OCI-LY7 (cell line): ENCODE measurements at regions of chr16 and their contacts with region 1.

Region 1: DNA sequence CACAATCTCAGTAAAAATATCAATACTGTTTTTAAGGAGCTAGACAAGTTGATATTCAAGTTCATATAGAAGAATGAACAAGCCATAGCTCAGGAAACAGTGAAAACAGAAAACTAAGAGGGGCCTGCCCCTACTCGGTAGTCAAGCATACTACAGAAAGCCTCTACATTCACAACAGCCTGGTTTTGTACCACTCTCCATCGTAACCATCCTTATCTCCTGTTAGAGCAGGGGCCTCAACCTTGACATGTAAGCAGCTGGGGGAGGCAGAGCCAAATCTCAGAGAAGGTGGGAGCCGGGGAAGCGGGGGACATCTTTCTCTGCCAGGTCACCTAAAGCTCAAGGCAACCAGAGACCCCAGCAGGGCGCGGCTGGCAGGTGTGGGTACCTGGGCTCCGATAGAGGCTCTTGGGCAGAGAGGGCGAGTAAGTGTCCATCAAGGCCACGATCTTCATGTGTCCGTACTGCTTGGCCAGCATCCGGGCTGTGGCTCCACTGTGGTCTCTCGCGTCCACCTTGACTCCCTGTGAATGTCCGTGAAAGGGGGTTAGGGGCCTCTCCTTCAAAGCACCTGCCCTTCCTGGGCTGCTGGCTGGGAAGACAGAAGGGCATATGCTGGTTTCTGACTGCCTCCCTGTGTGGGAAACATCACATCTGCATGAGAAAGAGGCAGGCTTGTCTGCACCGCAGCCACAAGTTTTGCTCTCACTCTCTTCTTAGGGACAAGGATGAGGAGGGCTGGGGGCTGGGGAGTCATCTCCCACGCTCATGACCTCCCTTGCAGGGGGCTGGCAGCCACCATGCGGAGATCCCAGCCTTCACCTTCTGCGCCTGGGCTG is 20.2 kb downstream of the ANKS3 start:
- DNase-seq: no peak
- H3K4me3 ChIP-seq: no peak overlapping the region
- H3K27ac ChIP-seq: no peak overlapping the region
- H3K4me1 ChIP-seq: peaks cover 9% of the 10 kb centered on the region
- CTCF ChIP-seq: no peak

Region 2: GRCh38 chr16:4957720-4958509 is 244.0 kb after region 1 on chr16 and contains the start of gene SEC14L5:
- CTCF ChIA-PET with region 1: no interaction called
- POLR2A ChIA-PET with region 1: no interaction called
- intact Hi-C with region 1: loop called (anchors 2 kb)
- DNase-seq: peak; percentile 98
- H3K4me3 ChIP-seq: peak within 1 kb of the TSS; percentile 56
- H3K27ac ChIP-seq: no peak within 1 kb of the TSS
- H3K4me1 ChIP-seq: peaks cover 3% of the 10 kb centered on the region
- CTCF ChIP-seq: 0 out of 2 replicates have a peak, but pooled peaks have one; percentile 19
- total RNA-seq, gene SEC14L5: not detected in 2 replicates